Psoas muscle (tissue), 8 donors: ENCODE measurements at regions of chr5 and their contacts with region 1.

Region 1: DNA sequence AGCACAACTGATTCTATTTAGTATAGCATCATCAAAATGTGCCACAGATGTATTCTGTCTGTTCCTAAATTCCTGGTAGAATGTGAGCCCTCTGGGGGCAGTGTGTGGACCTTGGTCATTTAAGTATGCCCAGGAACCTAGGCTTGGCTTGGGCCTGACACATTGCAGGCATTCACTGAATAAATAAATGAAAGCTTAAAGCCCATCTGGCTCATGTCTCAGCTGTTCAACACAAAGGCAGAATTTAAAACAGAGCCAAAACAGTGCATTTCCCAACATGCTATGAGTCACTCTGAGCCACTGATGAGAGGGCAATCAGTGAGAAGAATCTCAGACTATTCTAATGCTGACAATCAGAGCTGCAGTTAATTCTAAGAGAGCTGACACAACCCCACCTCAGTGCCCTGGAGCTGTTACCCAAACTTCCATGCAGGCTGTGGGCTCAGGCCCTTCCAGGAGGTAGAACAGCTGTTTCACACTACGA is 8.1 kb downstream of the FAM193B start:
- DNase-seq: peak; percentile 60 to 77
- ATAC-seq: peak; percentile 68 to 84 (median 82)
- H3K4me3 ChIP-seq: no peak overlapping the region
- H3K27ac ChIP-seq: peak overlapping the region; percentile 86
- H3K4me1 ChIP-seq: peaks cover 82% of the 10 kb centered on the region
- H3K27me3 ChIP-seq: no peaks in the 10 kb centered on the region
- CTCF ChIP-seq: no peak

Region 2: GRCh38 chr5:177592010-177592834 is 45.9 kb after region 1 on chr5 and contains the start of gene TMED9:
- intact Hi-C with region 1: loop called in 1 of 2 experiments (anchors 10 kb)
- DNase-seq: peak; percentile 84 to 91
- ATAC-seq: peak; percentile 96 to 100 (median 98)
- H3K4me3 ChIP-seq: peak within 1 kb of the TSS; percentile 81
- H3K27ac ChIP-seq: peak within 1 kb of the TSS; percentile 84
- H3K4me1 ChIP-seq: peaks cover 10% of the 10 kb centered on the region
- H3K27me3 ChIP-seq: peaks cover 0 to 16% (median 3%) of the 10 kb centered on the region in 3 donors
- CTCF ChIP-seq: peak; percentile 13
- total RNA-seq, gene TMED9: 47.5 to 71.9 (median 56.7) TPM

Region 3: DNA sequence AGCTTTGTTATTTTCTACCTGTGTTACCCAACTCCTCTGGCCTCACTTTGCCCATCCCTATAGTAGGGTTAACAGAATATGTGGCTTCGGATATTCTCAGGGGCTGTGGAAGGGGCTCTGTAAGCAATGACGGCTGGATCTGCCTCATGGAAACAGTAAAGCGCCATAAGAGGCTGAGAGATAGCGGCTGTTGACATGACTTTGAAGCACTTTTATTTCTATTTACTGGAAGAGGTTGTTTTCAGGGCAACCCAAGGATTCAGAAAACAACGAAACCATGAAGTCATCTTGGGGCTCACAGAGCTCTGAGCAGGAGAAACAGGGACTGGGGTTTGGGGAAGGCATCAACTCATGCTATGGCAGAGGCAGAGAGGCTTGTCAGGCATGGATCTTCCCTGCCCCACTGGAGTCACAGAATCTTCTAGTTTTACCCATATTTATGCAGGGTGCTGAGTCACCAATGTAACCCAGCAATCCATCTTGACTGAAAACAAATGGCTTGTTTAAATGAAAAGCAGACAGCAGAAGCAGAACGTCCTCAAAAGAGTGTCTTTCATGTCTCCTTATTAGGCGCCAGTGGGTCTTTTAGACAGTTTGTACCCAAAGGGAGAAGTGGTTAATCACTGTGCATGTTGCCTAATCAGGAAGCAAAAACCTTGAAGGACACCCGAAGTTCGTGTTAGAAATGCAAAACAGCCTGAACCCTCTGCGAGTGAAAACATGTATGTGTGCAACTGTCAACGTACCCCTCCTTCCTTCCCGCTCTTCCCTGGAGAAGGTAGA is 930.9 kb after region 1 on chr5:
- intact Hi-C with region 1: no loop called
- DNase-seq: no peak
- ATAC-seq: no peak
- H3K4me3 ChIP-seq: no peak overlapping the region
- H3K27ac ChIP-seq: no peak overlapping the region
- H3K4me1 ChIP-seq: no peaks in the 10 kb centered on the region
- H3K27me3 ChIP-seq: no peaks in the 10 kb centered on the region
- CTCF ChIP-seq: no peak